ENCODE measurements at regions of chr1 and their contacts with region 1.

Region 1: GRCh38 chr1:23367791-23368561 is 1.7 kb downstream of the ZNF436 start:
- DNase-seq: peak; percentile 98
- H3K4me3 ChIP-seq: peak overlapping the region; percentile 73
- H3K4me3 Mint-ChIP-seq: peak overlapping the region; percentile 80
- H3K27ac Mint-ChIP-seq: peak overlapping the region; percentile 85
- H3K4me1 ChIP-seq: peaks cover 22% of the 10 kb centered on the region
- H3K4me1 Mint-ChIP-seq: no peaks in the 10 kb centered on the region
- H3K27me3 ChIP-seq: no peaks in the 10 kb centered on the region
- H3K27me3 Mint-ChIP-seq: no peaks in the 10 kb centered on the region
- CTCF ChIP-seq: no peak

Region 2: GRCh38 chr1:23352096-23352695 is 15.8 kb before region 1 on chr1:
- CTCF ChIA-PET with region 1: no interaction called
- POLR2A ChIA-PET with region 1: no interaction called
- intact Hi-C with region 1: no loop called
- DNase-seq: no peak
- H3K4me3 ChIP-seq: no peak overlapping the region
- H3K4me3 Mint-ChIP-seq: no peak overlapping the region
- H3K27ac Mint-ChIP-seq: no peak overlapping the region
- H3K4me1 ChIP-seq: no peaks in the 10 kb centered on the region
- H3K4me1 Mint-ChIP-seq: no peaks in the 10 kb centered on the region
- H3K27me3 ChIP-seq: no peaks in the 10 kb centered on the region
- H3K27me3 Mint-ChIP-seq: no peaks in the 10 kb centered on the region
- CTCF ChIP-seq: no peak

Region 3: DNA sequence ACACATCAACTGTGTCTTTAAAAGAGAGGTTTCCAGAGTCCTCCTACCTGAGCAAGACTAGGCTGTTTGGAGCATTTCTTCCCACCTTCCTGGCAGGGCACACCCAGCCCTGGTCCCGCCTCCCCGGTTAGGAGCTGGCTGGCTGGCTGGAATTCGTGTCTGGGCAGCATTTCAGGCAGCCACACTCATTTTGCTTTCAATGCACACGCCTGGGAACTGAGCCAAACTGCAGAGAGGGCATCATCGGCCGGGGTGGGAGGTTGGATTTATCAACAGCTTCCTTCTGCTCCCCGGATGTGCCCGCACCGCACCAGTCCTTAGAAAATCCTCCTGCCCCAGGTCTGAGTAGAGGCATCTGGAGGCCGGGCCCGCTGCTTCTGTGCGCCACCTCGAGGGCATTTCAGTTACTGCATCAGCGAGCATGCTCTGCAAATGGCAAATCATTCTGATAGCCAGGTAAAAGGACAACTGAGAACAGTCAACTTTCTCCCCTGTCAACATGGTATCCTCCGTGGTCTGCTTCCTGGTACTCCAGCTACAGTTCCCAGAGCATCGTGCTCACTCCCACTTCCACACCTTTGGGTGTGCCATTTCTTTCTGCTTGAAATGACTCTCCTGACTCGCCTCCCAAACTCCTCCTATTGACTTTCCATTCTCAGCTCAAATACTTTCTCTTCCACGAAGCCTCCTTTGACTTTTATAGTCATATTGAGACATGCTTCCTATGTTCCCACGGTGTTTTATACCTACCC is 35.9 kb after region 1 on chr1:
- CTCF ChIA-PET with region 1: interaction called, 3 read pairs
- POLR2A ChIA-PET with region 1: no interaction called
- intact Hi-C with region 1: loop called (anchors 1 kb)
- DNase-seq: peak; percentile 80 to 84
- H3K4me3 ChIP-seq: peak overlapping the region; percentile 21; the same call in 1 of the 2 replicates
- H3K4me3 Mint-ChIP-seq: peak overlapping the region; percentile 64
- H3K27ac Mint-ChIP-seq: no peak overlapping the region
- H3K4me1 ChIP-seq: 0 out of 2 replicates have a peak, but pooled peaks cover 7% of the 10 kb centered on the region
- H3K4me1 Mint-ChIP-seq: peaks cover 8% of the 10 kb centered on the region
- H3K27me3 ChIP-seq: no peaks in the 10 kb centered on the region
- H3K27me3 Mint-ChIP-seq: no peaks in the 10 kb centered on the region
- CTCF ChIP-seq: peak; percentile 77 to 79

Measured in Caco-2 (cell line).